Activated CD4-positive, alpha-beta memory T cell treated with anti-CD3 and anti-CD28 coated beads for 36 hours (primary cell): ENCODE measurements at regions of chr6 and their contacts with region 1.

Region 1: DNA sequence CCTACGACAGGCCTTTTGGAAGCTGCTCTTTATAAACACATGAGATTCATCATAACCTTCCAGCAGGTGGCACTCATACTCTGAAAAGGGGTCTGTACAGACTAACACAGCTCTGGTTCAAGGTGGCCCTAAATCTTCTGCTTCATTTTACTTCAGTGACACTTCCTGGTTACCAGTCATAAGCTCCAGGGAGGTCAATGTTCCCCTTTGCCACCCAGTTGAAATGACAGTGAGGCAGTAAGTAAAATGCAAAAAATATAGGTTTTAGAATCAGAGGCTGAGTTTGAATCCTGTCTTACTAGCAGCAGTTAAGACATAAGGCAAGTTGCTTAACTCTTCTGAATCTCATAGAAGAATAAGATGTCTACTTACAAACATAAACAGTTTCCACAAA is 132.8 kb downstream of the CDK19 start:
- DNase-seq: peak; percentile 55
- H3K4me3 Mint-ChIP-seq: no peak overlapping the region
- H3K27ac Mint-ChIP-seq: peak overlapping the region; percentile 58
- H3K4me1 Mint-ChIP-seq: peaks cover 18% of the 10 kb centered on the region
- H3K27me3 Mint-ChIP-seq: no peaks in the 10 kb centered on the region

Region 2: GRCh38 chr6:110528101-110528929 is 154.1 kb before region 1 on chr6:
- CTCF ChIA-PET with region 1: interaction called, 7 read pairs
- POLR2A ChIA-PET with region 1: no interaction called
- intact Hi-C with region 1: loop called (anchors 2 kb)
- DNase-seq: peak; percentile 57
- H3K4me3 Mint-ChIP-seq: no peak overlapping the region
- H3K27ac Mint-ChIP-seq: no peak overlapping the region
- H3K4me1 Mint-ChIP-seq: peaks cover 4% of the 10 kb centered on the region
- H3K27me3 Mint-ChIP-seq: no peaks in the 10 kb centered on the region

Region 3: GRCh38 chr6:110646951-110647910 is 35.2 kb before region 1 on chr6:
- CTCF ChIA-PET with region 1: no interaction called
- POLR2A ChIA-PET with region 1: no interaction called
- intact Hi-C with region 1: no loop called
- DNase-seq: no peak
- H3K4me3 Mint-ChIP-seq: no peak overlapping the region
- H3K27ac Mint-ChIP-seq: no peak overlapping the region
- H3K4me1 Mint-ChIP-seq: peaks cover 8% of the 10 kb centered on the region
- H3K27me3 Mint-ChIP-seq: no peaks in the 10 kb centered on the region

Region 4: GRCh38 chr6:110882271-110882613 is 199.8 kb after region 1 on chr6:
- CTCF ChIA-PET with region 1: interaction called, 46 read pairs
- POLR2A ChIA-PET with region 1: interaction called, 11 read pairs
- intact Hi-C with region 1: loop called (anchors 1 kb)
- DNase-seq: no peak
- H3K4me3 Mint-ChIP-seq: peak overlapping the region; percentile 2
- H3K27ac Mint-ChIP-seq: no peak overlapping the region
- H3K4me1 Mint-ChIP-seq: peaks cover 88% of the 10 kb centered on the region
- H3K27me3 Mint-ChIP-seq: no peaks in the 10 kb centered on the region

Region 5: GRCh38 chr6:110949679-110950285 is 267.3 kb after region 1 on chr6:
- CTCF ChIA-PET with region 1: interaction called, 44 read pairs
- POLR2A ChIA-PET with region 1: interaction called, 3 read pairs
- intact Hi-C with region 1: loop called (anchors 1 kb)
- DNase-seq: no peak
- H3K4me3 Mint-ChIP-seq: no peak overlapping the region
- H3K27ac Mint-ChIP-seq: no peak overlapping the region
- H3K4me1 Mint-ChIP-seq: peaks cover 1% of the 10 kb centered on the region
- H3K27me3 Mint-ChIP-seq: no peaks in the 10 kb centered on the region

Region 6: GRCh38 chr6:110999634-111000270 is 317.3 kb after region 1 on chr6:
- CTCF ChIA-PET with region 1: interaction called, 3 read pairs
- POLR2A ChIA-PET with region 1: no interaction called
- intact Hi-C with region 1: loop called (anchors 1 kb)
- DNase-seq: no peak
- H3K4me3 Mint-ChIP-seq: no peak overlapping the region
- H3K27ac Mint-ChIP-seq: no peak overlapping the region
- H3K4me1 Mint-ChIP-seq: peaks cover 4% of the 10 kb centered on the region
- H3K27me3 Mint-ChIP-seq: no peaks in the 10 kb centered on the region

Region 7: GRCh38 chr6:111700135-111700690 is 1017.8 kb after region 1 on chr6:
- CTCF ChIA-PET with region 1: no interaction called
- POLR2A ChIA-PET with region 1: no interaction called
- intact Hi-C with region 1: no loop called
- DNase-seq: no peak
- H3K4me3 Mint-ChIP-seq: no peak overlapping the region
- H3K27ac Mint-ChIP-seq: peak overlapping the region; percentile 40
- H3K4me1 Mint-ChIP-seq: peaks cover 36% of the 10 kb centered on the region
- H3K27me3 Mint-ChIP-seq: no peaks in the 10 kb centered on the region